ENCODE measurements at regions of chr6 and their contacts with region 1.

Region 1: GRCh38 chr6:134174672-134175198 is 122.3 kb upstream of the SLC2A12 start:
- DNase-seq: peak; percentile 95 to 98 (median 98)
- ATAC-seq: peak; percentile 91 to 95
- H3K4me3 ChIP-seq: peak overlapping the region; percentile 86
- H3K27ac ChIP-seq: peak overlapping the region; percentile 94
- H3K4me1 ChIP-seq: peaks cover 3% of the 10 kb centered on the region
- H3K27me3 ChIP-seq: no peaks in the 10 kb centered on the region

Region 2: DNA sequence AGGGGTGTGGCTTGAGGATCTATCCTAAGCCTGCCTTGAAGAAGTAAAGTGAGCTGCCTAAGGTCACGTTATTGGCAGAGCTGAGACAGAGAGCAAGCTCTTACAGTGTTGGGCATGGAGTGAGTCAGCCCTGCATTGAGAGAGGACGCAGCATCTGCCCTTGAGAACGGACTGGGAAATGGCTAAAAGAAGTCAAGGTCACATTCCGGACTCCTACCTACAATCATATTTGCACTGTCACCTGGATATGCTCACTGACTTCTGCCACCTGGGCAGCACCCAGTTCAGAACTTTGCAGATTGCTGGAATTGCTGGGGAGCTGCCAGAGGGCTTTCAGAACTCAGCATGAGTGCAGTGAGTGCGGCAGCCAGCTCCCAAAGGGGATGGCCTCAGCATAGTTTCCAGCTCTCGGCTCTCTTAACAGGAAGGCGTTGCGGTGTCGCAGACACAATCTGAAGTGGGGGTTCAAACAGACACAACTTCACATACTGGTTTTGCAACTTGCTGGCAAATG is 342.5 kb after region 1 on chr6:
- intact Hi-C with region 1: loop called in 1 of 4 experiments (anchors 10 kb)
- DNase-seq: peak; percentile 85 to 92 (median 90)
- ATAC-seq: peak; percentile 95
- H3K4me3 ChIP-seq: no peak overlapping the region
- H3K27ac ChIP-seq: peak overlapping the region; percentile 94
- H3K4me1 ChIP-seq: peaks cover 5% of the 10 kb centered on the region
- H3K27me3 ChIP-seq: no peaks in the 10 kb centered on the region

Region 3: DNA sequence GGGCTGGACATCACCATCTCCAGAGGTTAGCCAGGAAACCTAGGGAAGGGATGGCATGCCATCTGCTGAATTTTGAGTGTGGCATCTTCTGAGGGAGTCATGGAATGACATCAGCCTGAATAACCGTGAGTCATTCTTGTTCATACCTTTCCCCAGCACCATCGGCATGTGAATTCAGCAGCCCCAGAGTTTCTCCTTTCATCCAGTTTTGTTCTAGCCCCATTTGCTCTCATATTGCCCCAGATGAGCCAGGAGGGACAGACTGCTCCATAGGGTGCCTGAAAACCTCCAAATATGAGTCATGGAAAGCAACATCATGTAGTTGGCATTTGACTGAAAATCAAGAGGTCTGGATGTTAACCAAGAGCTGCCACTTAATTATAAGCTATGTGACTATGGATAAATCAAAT is 362.4 kb after region 1 on chr6:
- intact Hi-C with region 1: loop called in 2 of 4 experiments (anchors 5 to 10 kb)
- DNase-seq: no peak
- ATAC-seq: no peak
- H3K4me3 ChIP-seq: no peak overlapping the region
- H3K27ac ChIP-seq: peak overlapping the region; percentile 56
- H3K4me1 ChIP-seq: peaks cover 5% of the 10 kb centered on the region
- H3K27me3 ChIP-seq: no peaks in the 10 kb centered on the region

Region 4: GRCh38 chr6:134640975-134641429 is 466.3 kb after region 1 on chr6:
- intact Hi-C with region 1: loop called (anchors 2 to 5 kb)
- DNase-seq: peak; percentile 77 to 90 (median 83)
- ATAC-seq: peak; percentile 89 to 93
- H3K4me3 ChIP-seq: no peak overlapping the region
- H3K27ac ChIP-seq: no peak overlapping the region
- H3K4me1 ChIP-seq: no peaks in the 10 kb centered on the region
- H3K27me3 ChIP-seq: no peaks in the 10 kb centered on the region

Region 5: GRCh38 chr6:134822920-134823709 is 648.4 kb after region 1 on chr6:
- intact Hi-C with region 1: loop called (anchors 5 kb)
- DNase-seq: peak; percentile 32 to 69 (median 66)
- ATAC-seq: peak; percentile 77 to 92
- H3K4me3 ChIP-seq: no peak overlapping the region
- H3K27ac ChIP-seq: no peak overlapping the region
- H3K4me1 ChIP-seq: peaks cover 2% of the 10 kb centered on the region
- H3K27me3 ChIP-seq: no peaks in the 10 kb centered on the region

Region 6: DNA sequence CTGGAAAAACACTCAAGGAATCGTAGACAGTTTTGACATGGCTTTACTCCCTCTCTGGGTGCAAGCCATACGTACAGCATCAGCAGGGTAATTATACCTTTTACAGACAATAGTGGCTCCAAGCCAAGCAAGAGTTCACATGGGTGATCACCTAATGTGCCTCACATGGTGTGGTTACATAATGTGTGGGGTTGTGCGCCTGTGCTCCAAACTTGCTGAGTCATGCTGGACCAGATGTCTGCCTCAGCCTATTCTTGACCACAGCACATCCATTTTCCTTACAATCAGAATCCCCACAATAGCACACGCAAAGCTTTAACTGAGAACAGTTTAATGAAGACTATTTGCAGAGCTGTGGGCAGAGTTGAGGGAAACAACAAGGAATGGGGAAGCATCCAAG is 700.6 kb after region 1 on chr6:
- intact Hi-C with region 1: loop called in 3 of 4 experiments (anchors 5 to 10 kb)
- DNase-seq: no peak
- ATAC-seq: no peak
- H3K4me3 ChIP-seq: no peak overlapping the region
- H3K27ac ChIP-seq: no peak overlapping the region
- H3K4me1 ChIP-seq: no peaks in the 10 kb centered on the region
- H3K27me3 ChIP-seq: no peaks in the 10 kb centered on the region

Region 7: GRCh38 chr6:134882426-134883038 is 707.8 kb after region 1 on chr6:
- intact Hi-C with region 1: loop called in 3 of 4 experiments (anchors 5 to 10 kb)
- DNase-seq: peak; percentile 31 to 87 (median 80)
- ATAC-seq: peak; percentile 64 to 79
- H3K4me3 ChIP-seq: no peak overlapping the region
- H3K27ac ChIP-seq: no peak overlapping the region
- H3K4me1 ChIP-seq: no peaks in the 10 kb centered on the region
- H3K27me3 ChIP-seq: no peaks in the 10 kb centered on the region